CD8-positive, alpha-beta T cell (primary cell): ENCODE measurements at regions of chr1 and their contacts with region 1.

Region 1: GRCh38 chr1:24642481-24643361 is at the start of gene SRRM1:
- DNase-seq: peak; percentile 96 to 100 (median 98)
- ATAC-seq: peak; percentile 86
- H3K4me3 ChIP-seq: peak within 1 kb of the TSS; percentile 89 to 98
- H3K4me3 Mint-ChIP-seq: peak within 1 kb of the TSS; percentile 88
- H3K27ac ChIP-seq: peak within 1 kb of the TSS; percentile 98 to 100
- H3K27ac Mint-ChIP-seq: peak within 1 kb of the TSS; percentile 99
- H3K4me1 ChIP-seq: peaks cover 32% of the 10 kb centered on the region
- H3K4me1 Mint-ChIP-seq: peaks cover 41% of the 10 kb centered on the region
- H3K27me3 ChIP-seq: no peaks in the 10 kb centered on the region
- H3K27me3 Mint-ChIP-seq: no peaks in the 10 kb centered on the region
- CTCF ChIP-seq: no peak
- total RNA-seq, gene SRRM1: 460 to 474 TPM

Region 2: DNA sequence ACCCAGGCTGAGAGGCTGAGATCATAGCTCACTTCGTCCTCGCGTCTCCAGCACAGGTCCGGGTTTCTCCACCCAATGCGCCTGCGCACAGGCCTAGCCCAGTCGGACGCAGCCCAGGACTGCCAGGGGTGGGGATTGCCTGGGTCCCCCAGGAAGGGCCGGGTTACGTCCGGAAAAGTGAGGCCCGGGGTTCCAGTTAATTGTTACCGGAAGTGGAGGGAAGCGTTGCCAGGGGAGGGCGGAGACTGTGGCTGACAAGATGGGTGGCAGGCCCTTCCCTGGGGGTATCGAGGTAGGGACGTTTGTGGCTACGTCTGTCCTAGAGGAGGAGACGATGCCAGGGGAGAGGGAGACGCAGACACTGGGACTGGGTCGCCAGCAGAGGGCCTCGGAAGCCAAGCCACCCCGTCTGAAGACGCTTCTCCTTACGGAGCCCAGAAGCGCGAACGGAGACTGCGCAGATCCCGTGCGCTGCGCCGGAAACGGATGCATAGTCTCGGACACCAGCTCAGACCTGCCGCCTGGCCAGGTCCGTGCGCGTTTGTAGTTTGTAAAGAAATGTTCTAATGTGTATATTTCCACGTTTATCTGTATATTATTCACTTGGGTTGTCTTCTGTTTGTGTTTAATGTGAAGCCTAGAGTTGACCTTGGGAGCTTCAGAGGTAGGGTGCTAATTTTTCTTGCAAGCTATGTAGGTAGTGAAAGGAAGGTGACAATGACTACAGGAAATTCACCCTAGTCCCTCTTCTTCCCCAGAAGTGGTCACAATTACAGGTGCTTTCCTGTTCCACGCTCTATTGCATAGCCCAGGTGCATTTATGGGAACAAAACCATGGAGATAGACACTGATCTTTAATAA is 597.2 kb after region 1 on chr1:
- CTCF ChIA-PET with region 1: no interaction called
- POLR2A ChIA-PET with region 1: no interaction called
- intact Hi-C with region 1: loop called in 1 of 2 experiments (anchors 10 kb)
- DNase-seq: peak; percentile 64 to 94 (median 82)
- ATAC-seq: peak; percentile 84
- H3K4me3 ChIP-seq: peak overlapping the region; percentile 37 to 60
- H3K4me3 Mint-ChIP-seq: peak overlapping the region; percentile 92
- H3K27ac ChIP-seq: peak overlapping the region; percentile 64 to 88
- H3K27ac Mint-ChIP-seq: peak overlapping the region; percentile 97
- H3K4me1 ChIP-seq: peaks cover 47% of the 10 kb centered on the region
- H3K4me1 Mint-ChIP-seq: peaks cover 61% of the 10 kb centered on the region
- H3K27me3 ChIP-seq: no peaks in the 10 kb centered on the region
- H3K27me3 Mint-ChIP-seq: no peaks in the 10 kb centered on the region
- CTCF ChIP-seq: peak; percentile 61